ENCODE measurements at regions of chr7 and their contacts with region 1.

Region 1: DNA sequence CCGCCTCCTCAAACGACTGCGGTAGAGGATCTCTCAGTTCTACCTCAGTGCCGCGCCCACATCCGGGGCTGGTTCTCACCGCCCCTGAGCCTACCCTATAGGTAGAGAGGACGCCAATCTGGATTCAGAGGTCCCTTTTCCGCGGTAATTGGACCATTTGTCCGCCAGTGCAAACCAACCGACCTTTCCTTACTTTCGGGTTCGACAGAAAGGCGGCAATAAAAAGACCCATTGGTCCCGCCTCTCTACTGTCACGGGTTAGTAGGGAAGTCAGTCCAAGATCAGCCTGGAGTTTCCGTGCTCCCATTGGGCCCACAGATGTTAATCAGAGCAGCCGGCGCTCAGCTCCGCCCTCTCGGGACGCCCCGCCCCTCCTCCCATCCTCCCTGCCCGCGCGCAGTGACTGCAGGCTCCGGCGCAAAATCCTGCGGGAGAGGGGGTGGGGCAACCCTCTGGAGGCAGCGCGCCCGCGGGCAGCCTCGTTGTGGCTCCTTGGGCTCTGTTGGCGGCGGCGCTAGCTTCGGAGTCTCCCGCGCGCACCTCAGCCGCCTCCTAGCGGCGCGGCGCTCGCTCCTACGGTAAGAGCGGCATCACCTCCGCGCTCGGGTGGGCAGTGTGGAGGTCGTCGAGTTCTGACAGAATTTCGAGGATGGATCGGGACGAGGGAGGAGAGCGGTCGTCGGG is at the starts of genes PHTF2 and TMEM60:
- DNase-seq: peak; percentile 99 to 100
- ATAC-seq: peak; percentile 99
- H3K4me3 ChIP-seq: peak within 1 kb of the TSS; percentile 79 to 81
- H3K27ac ChIP-seq: peak within 1 kb of the TSS in 1 of 2 donors; percentile 79
- H3K4me1 ChIP-seq: no peaks in the 10 kb centered on the region
- H3K27me3 ChIP-seq: no peaks in the 10 kb centered on the region
- total RNA-seq, gene PHTF2: 38.0 to 38.4 TPM
- total RNA-seq, gene TMEM60: 11.0 to 12.7 TPM

Region 2: GRCh38 chr7:77696198-77697028 is 102.1 kb before region 1 on chr7 and contains the start of gene RSBN1L:
- intact Hi-C with region 1: loop called in 1 of 2 experiments (anchors 5 kb)
- DNase-seq: peak; percentile 99
- ATAC-seq: peak; percentile 100
- H3K4me3 ChIP-seq: peak within 1 kb of the TSS; percentile 89 to 97
- H3K27ac ChIP-seq: peak within 1 kb of the TSS; percentile 31 to 81
- H3K4me1 ChIP-seq: peaks cover 0 to 3% of the 10 kb centered on the region in 2 donors
- H3K27me3 ChIP-seq: no peaks in the 10 kb centered on the region
- total RNA-seq, gene RSBN1L: 19.7 to 25.4 TPM

Region 3: GRCh38 chr7:77830649-77831355 is 32.3 kb after region 1 on chr7:
- intact Hi-C with region 1: no loop called
- DNase-seq: no peak
- ATAC-seq: no peak
- H3K4me3 ChIP-seq: no peak overlapping the region
- H3K27ac ChIP-seq: no peak overlapping the region
- H3K4me1 ChIP-seq: no peaks in the 10 kb centered on the region
- H3K27me3 ChIP-seq: no peaks in the 10 kb centered on the region

Region 4: GRCh38 chr7:77910124-77910523 is 111.6 kb after region 1 on chr7:
- intact Hi-C with region 1: loop called in 1 of 2 experiments (anchors 5 kb)
- DNase-seq: no peak
- ATAC-seq: no peak
- H3K4me3 ChIP-seq: no peak overlapping the region
- H3K27ac ChIP-seq: no peak overlapping the region
- H3K4me1 ChIP-seq: peaks cover 0 to 1% of the 10 kb centered on the region in 2 donors
- H3K27me3 ChIP-seq: no peaks in the 10 kb centered on the region